MCF 10A (cell line): ENCODE measurements at regions of chr20 and their contacts with region 1.

Region 1: DNA sequence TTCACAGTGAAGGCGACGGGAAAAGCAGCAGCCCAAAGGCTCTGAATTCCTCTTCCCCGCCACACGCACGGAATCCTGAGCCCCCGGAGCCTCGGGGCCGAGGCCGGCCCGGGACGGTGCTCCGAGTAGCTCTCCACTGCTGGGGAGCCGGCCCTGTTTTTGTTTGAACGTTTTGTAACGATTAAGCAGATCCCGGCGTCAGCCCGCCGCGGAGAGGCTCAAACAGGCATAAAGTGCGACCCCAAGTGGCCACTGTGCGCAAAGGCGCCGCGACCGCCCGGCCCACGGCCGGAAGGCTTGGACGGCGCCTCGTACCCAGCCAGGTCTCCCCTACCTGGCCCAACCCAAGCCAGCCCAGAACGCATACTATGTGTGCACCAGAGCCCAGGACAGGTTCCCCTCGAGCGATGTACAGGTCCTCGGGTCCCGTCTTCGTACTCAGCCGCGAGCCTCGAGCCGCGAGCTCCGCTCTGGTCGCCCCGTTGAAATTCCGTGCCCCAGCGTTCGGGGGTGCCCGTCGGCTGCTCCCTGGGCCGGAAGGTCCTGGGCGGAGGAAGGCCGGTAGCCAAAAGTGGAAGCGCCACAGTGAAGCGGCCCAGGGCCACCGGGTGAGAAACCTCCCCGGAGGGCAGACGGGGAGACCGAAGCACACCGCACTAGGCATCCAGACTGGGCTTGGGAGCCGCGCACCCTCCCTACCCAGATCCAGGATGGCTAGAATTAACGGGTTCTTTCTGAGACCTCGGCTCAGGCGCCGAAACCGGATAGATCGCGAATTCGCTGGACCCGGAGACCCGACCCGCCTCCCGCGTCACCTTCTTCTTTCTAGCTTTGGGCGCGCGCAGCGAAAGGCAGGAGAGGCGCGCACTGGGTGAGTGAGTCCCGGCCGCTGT is 1.2 kb upstream of the MAFB start:
- DNase-seq: peak; percentile 92
- H3K4me3 Mint-ChIP-seq: peak overlapping the region; percentile 81
- H3K27ac Mint-ChIP-seq: no peak overlapping the region
- H3K4me1 Mint-ChIP-seq: no peaks in the 10 kb centered on the region
- H3K27me3 Mint-ChIP-seq: no peaks in the 10 kb centered on the region
- CTCF ChIP-seq: peak; percentile 95

Region 2: GRCh38 chr20:39874049-39874888 is 815.9 kb before region 1 on chr20:
- CTCF ChIA-PET with region 1: interaction called, 9 read pairs
- POLR2A ChIA-PET with region 1: interaction called, 11 read pairs
- intact Hi-C with region 1: no loop called
- DNase-seq: peak; percentile 88
- H3K4me3 Mint-ChIP-seq: no peak overlapping the region
- H3K27ac Mint-ChIP-seq: no peak overlapping the region
- H3K4me1 Mint-ChIP-seq: peaks cover 50% of the 10 kb centered on the region
- H3K27me3 Mint-ChIP-seq: no peaks in the 10 kb centered on the region
- CTCF ChIP-seq: peak; percentile 93

Region 3: GRCh38 chr20:40265825-40266533 is 424.2 kb before region 1 on chr20:
- CTCF ChIA-PET with region 1: interaction called, 83 read pairs
- POLR2A ChIA-PET with region 1: interaction called, 21 read pairs
- intact Hi-C with region 1: loop called (anchors 1 kb)
- DNase-seq: peak; percentile 75
- H3K4me3 Mint-ChIP-seq: no peak overlapping the region
- H3K27ac Mint-ChIP-seq: no peak overlapping the region
- H3K4me1 Mint-ChIP-seq: peaks cover 4% of the 10 kb centered on the region
- H3K27me3 Mint-ChIP-seq: no peaks in the 10 kb centered on the region
- CTCF ChIP-seq: peak; percentile 51

Region 4: DNA sequence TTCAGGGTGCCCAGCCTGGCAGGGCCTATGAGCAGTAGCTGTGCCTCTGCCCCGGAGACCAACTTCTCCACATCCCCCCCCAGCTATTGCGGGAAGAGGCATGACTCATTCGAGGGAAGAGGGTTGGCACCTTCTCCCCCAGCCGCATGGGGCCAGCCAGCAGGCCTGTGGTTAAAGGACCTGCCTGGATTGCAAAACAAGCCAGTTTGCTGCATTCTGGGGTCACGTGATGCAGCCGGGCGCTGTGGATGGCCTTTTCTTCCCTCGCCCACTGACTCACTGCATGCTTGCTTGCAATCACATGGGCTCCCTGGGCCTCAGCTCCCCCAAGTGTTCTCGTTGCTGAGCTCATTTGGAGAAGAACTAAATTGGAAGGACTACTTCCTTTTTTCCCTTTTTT is 183.6 kb before region 1 on chr20:
- CTCF ChIA-PET with region 1: interaction called, 10 read pairs
- POLR2A ChIA-PET with region 1: interaction called, 58 read pairs
- intact Hi-C with region 1: loop called (anchors 1 kb)
- DNase-seq: peak; percentile 99
- H3K4me3 Mint-ChIP-seq: no peak overlapping the region
- H3K27ac Mint-ChIP-seq: peak overlapping the region; percentile 74
- H3K4me1 Mint-ChIP-seq: peaks cover 41% of the 10 kb centered on the region
- H3K27me3 Mint-ChIP-seq: no peaks in the 10 kb centered on the region
- CTCF ChIP-seq: no peak

Region 5: DNA sequence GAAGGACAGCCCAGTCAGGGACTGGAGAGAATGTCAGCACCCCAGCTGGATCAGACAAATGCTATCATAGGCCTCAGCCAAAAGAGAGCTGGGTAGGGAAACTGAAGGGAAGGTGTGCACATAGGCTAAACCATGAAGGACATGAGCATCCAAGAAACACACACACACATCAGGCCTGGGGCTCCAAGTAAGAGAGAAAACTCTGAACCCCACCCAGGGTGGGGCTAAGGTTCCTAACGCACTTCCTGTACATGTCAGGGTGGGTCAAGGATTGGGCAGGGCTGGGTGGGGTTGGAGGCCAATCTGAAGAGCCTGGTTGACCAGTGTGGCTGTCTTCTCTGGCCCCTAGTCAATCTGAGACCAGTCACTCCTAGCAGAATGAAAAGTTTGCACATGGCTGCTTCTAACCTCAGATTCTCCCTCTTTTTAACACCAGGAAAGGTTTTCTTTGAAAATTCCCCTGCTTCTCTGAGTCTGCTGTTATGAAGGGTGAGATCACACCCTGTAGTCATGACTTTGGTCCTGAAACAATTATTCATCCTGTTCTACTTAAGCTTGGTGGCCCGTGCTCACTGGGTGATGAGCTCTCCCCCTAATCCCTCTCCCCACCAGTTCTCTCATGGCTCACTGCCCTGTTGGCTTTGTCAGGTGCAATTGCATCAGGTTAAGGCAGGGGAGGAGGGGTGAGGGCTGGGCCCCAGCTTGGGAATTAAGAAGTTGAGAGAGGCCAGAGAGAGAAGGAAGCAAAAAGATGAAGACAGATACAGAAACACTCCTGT is 89.6 kb before region 1 on chr20:
- CTCF ChIA-PET with region 1: interaction called, 4 read pairs
- POLR2A ChIA-PET with region 1: interaction called, 7 read pairs
- intact Hi-C with region 1: loop called (anchors 2 kb)
- DNase-seq: peak; percentile 57
- H3K4me3 Mint-ChIP-seq: no peak overlapping the region
- H3K27ac Mint-ChIP-seq: peak overlapping the region; percentile 83
- H3K4me1 Mint-ChIP-seq: peaks cover 7% of the 10 kb centered on the region
- H3K27me3 Mint-ChIP-seq: no peaks in the 10 kb centered on the region
- CTCF ChIP-seq: no peak

Region 6: GRCh38 chr20:40676491-40677269 is 13.5 kb before region 1 on chr20:
- CTCF ChIA-PET with region 1: interaction called, 5 read pairs
- POLR2A ChIA-PET with region 1: interaction called, 29 read pairs
- intact Hi-C with region 1: no loop called
- DNase-seq: no peak
- H3K4me3 Mint-ChIP-seq: no peak overlapping the region
- H3K27ac Mint-ChIP-seq: no peak overlapping the region
- H3K4me1 Mint-ChIP-seq: no peaks in the 10 kb centered on the region
- H3K27me3 Mint-ChIP-seq: no peaks in the 10 kb centered on the region
- CTCF ChIP-seq: no peak